Mucosa of descending colon (tissue), 3 donors: ENCODE measurements at regions of chr3 and their contacts with region 1.

Region 1: GRCh38 chr3:15241341-15241740 is 35.3 kb downstream of the CAPN7 start:
- DNase-seq: peak in 1 of 3 donors; percentile 31
- ATAC-seq: no peak
- H3K4me3 ChIP-seq: no peak overlapping the region
- H3K4me1 ChIP-seq: peaks cover 1% of the 10 kb centered on the region
- CTCF ChIP-seq: no peak

Region 2: GRCh38 chr3:15367059-15367458 is 125.7 kb after region 1 on chr3:
- intact Hi-C with region 1: no loop called
- DNase-seq: no peak
- ATAC-seq: no peak
- H3K4me3 ChIP-seq: no peak overlapping the region
- H3K4me1 ChIP-seq: no peaks in the 10 kb centered on the region
- CTCF ChIP-seq: no peak

Region 3: DNA sequence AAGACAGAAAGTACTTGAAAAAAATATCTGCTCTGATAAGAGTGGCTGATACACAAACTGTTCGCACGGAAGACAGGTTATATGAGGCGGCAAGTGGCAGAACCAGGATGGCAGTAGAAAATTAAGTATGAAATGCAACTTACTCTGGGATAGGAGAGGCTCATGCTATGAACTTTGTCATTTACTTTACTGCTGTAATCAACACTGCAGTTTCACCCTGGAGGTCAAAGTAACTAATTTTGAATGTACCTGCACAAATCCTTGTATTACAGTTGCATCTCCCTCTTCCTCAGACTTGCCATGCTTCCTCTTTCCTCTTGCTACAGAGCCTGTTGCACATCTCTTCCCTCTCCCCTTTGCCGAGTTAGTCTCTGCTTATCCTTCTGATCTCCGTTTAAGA is 321.2 kb after region 1 on chr3:
- intact Hi-C with region 1: loop called in 1 of 2 experiments (anchors 10 kb)
- DNase-seq: peak in 1 of 3 donors; percentile 13
- ATAC-seq: peak; percentile 83
- H3K4me3 ChIP-seq: no peak overlapping the region
- H3K4me1 ChIP-seq: no peaks in the 10 kb centered on the region
- CTCF ChIP-seq: no peak